ENCODE measurements at regions of chr11 and their contacts with region 1.

Region 1: DNA sequence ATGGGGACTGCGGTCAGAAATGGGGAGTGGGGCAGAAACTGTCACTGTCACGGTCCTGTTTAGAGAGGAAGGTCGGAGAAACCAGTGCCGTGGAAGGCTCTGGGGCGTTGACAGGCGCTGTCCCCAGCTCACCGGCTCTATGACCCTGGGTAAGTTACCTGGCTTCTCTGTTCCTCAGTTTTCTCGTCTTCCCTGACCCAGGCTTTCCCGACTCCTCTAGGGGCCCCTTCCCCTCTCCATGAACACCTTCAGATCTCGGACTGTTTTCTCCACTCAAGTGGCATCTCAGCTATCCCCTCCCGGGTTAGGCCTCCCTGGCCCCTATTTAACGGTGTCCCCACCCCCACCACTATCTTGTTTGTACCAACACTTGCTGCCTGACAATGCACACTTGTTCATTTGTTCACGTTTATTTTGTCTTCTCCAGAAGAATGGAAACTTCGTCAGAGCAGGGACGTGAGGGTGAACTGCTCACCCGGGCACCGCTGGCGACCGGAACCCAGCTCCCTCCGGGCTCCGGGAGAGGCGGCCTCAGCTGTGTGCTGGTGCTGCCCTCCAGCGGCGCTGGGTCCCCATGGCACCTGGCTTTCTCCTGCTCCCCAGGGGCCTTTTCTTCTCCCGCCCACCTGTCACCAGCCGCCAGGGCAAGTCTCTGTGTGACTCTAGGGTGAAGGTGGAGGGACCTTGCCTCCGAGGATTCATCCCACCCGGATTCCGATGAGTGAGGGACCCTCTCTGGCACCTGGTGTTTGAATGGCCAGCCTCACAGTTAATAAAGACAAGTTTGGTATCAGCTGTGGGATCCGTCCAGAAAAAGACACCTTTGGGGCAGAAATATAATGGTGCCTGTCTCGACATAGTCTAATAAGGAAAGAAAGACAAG is 33.1 kb upstream of the SLC35C1 start:
- DNase-seq: peak; percentile 65 to 81
- ATAC-seq: peak; percentile 87 to 92
- H3K4me3 ChIP-seq: peak overlapping the region; percentile 47 to 68 (median 58)
- H3K27ac ChIP-seq: peak overlapping the region; percentile 60 to 81 (median 75)
- H3K4me1 ChIP-seq: peaks cover 0 to 8% of the 10 kb centered on the region in 2 donors
- H3K27me3 ChIP-seq: no peaks in the 10 kb centered on the region
- CTCF ChIP-seq: peak; percentile 88 to 98 (median 95)
- POLR2A ChIP-seq: no peak

Region 2: DNA sequence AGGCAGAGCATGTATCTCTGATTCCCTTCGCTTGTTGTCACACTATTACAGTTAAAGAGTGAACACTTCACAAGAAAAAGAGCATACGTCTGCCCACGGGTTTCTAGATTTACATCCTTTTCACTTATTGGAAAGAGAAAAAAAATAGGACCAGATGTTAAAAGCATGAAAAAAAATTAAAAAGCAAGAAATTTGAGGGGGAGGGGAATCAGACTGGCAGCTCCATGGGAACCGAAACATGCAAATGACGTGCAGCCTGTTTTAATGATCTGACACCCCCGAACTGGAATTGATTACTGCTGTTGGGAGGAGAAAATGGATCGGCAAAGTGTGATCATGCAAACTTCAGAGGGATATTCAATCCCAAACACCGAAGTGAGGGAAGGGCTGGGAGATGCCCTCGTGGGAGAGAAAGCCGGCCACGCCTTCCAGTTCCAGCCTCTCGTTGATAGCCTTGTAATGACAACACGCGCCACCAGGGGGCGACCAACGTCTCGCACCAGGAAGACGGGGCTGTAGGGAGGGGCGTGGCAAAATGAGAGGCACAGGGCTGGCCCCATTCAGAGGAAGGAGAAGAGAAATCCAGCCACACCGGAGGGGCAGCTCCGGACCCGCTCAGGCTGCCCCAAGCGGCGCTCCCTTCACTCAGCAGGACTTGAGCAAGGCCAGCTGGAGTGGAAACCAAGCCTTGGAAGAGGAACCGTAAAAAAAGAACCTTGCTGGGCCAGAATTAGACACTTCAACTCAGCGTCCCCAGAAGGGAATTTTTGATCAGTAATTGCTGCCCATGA is 431.9 kb before region 1 on chr11:
- in situ Hi-C with region 1: loop called in 2 of 4 experiments (anchors 10 kb)
- intact Hi-C with region 1: loop called (anchors 1 kb)
- DNase-seq: peak; percentile 70 to 86
- ATAC-seq: peak; percentile 96 to 99
- H3K4me3 ChIP-seq: peak overlapping the region; percentile 1 to 34 (median 19)
- H3K27ac ChIP-seq: no peak overlapping the region
- H3K4me1 ChIP-seq: peaks cover 10 to 14% of the 10 kb centered on the region in 2 donors
- H3K27me3 ChIP-seq: peaks cover 0 to 6% (median 0%) of the 10 kb centered on the region in 3 donors
- CTCF ChIP-seq: peak; percentile 86 to 90 (median 87)
- POLR2A ChIP-seq: no peak

Region 3: GRCh38 chr11:45365961-45366618 is 405.7 kb before region 1 on chr11:
- in situ Hi-C with region 1: loop called (anchors 10 kb)
- intact Hi-C with region 1: no loop called
- DNase-seq: no peak
- ATAC-seq: no peak
- H3K4me3 ChIP-seq: no peak overlapping the region
- H3K27ac ChIP-seq: no peak overlapping the region
- H3K4me1 ChIP-seq: no peaks in the 10 kb centered on the region
- H3K27me3 ChIP-seq: no peaks in the 10 kb centered on the region
- CTCF ChIP-seq: no peak
- POLR2A ChIP-seq: no peak

Region 4: GRCh38 chr11:45371251-45372115 is 400.3 kb before region 1 on chr11:
- in situ Hi-C with region 1: loop called (anchors 10 kb)
- intact Hi-C with region 1: no loop called
- DNase-seq: peak in 1 of 2 donors; percentile 45
- ATAC-seq: peak; percentile 68 to 75
- H3K4me3 ChIP-seq: no peak overlapping the region
- H3K27ac ChIP-seq: no peak overlapping the region
- H3K4me1 ChIP-seq: no peaks in the 10 kb centered on the region
- H3K27me3 ChIP-seq: no peaks in the 10 kb centered on the region
- CTCF ChIP-seq: peak; percentile 64 to 88 (median 76)
- POLR2A ChIP-seq: no peak

Region 5: DNA sequence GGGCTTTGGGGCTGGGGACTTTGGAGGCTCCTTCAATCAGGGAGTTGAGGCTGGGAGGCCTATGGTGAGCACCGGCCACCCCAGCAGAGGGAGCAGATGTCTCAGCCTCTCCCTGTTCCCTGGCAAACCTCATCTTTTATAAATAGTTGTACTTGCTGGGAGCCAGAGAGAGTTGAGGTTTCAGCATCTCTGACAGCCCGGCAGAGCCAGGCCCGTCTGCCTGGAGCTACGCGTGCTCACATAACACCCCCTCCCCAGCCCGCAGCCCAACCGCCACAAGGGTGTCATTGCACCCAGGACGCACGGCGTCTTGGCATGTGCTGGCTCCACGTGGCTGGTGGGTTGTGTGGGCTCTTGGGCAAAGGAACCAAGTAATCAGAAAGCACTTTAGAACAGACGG is 233.4 kb before region 1 on chr11:
- in situ Hi-C with region 1: loop called (anchors 5 to 25 kb)
- intact Hi-C with region 1: loop called (anchors 1 kb)
- DNase-seq: peak; percentile 35 to 58
- ATAC-seq: peak; percentile 99
- H3K4me3 ChIP-seq: no peak overlapping the region
- H3K27ac ChIP-seq: peak overlapping the region in 1 of 4 donors; percentile 42
- H3K4me1 ChIP-seq: peaks cover 0 to 6% of the 10 kb centered on the region in 2 donors
- H3K27me3 ChIP-seq: no peaks in the 10 kb centered on the region
- CTCF ChIP-seq: peak; percentile 21 to 66 (median 35)
- POLR2A ChIP-seq: no peak

Region 6: GRCh38 chr11:45543808-45544422 is 227.9 kb before region 1 on chr11:
- in situ Hi-C with region 1: loop called (anchors 5 to 25 kb)
- intact Hi-C with region 1: no loop called
- DNase-seq: no peak
- ATAC-seq: no peak
- H3K4me3 ChIP-seq: no peak overlapping the region
- H3K27ac ChIP-seq: no peak overlapping the region
- H3K4me1 ChIP-seq: no peaks in the 10 kb centered on the region
- H3K27me3 ChIP-seq: peaks cover 0 to 5% (median 0%) of the 10 kb centered on the region in 3 donors
- CTCF ChIP-seq: no peak
- POLR2A ChIP-seq: no peak

Region 7: GRCh38 chr11:45593992-45594391 is 177.8 kb before region 1 on chr11:
- in situ Hi-C with region 1: no loop called
- intact Hi-C with region 1: no loop called
- DNase-seq: no peak
- ATAC-seq: no peak
- H3K4me3 ChIP-seq: no peak overlapping the region
- H3K27ac ChIP-seq: no peak overlapping the region
- H3K4me1 ChIP-seq: no peaks in the 10 kb centered on the region
- H3K27me3 ChIP-seq: no peaks in the 10 kb centered on the region
- CTCF ChIP-seq: no peak
- POLR2A ChIP-seq: no peak

Region 8: GRCh38 chr11:45617871-45618601 is 153.8 kb before region 1 on chr11:
- in situ Hi-C with region 1: no loop called
- intact Hi-C with region 1: no loop called
- DNase-seq: no peak
- ATAC-seq: no peak
- H3K4me3 ChIP-seq: no peak overlapping the region
- H3K27ac ChIP-seq: no peak overlapping the region
- H3K4me1 ChIP-seq: peaks cover 0 to 10% of the 10 kb centered on the region in 2 donors
- H3K27me3 ChIP-seq: peaks cover 0 to 4% (median 0%) of the 10 kb centered on the region in 3 donors
- CTCF ChIP-seq: no peak
- POLR2A ChIP-seq: no peak

Region 9: GRCh38 chr11:45655347-45655756 is 116.5 kb before region 1 on chr11:
- in situ Hi-C with region 1: loop called in 2 of 4 experiments (anchors 5 to 25 kb)
- intact Hi-C with region 1: loop called (anchors 1 kb)
- DNase-seq: peak; percentile 38 to 63
- ATAC-seq: peak; percentile 78 to 79
- H3K4me3 ChIP-seq: no peak overlapping the region
- H3K27ac ChIP-seq: no peak overlapping the region
- H3K4me1 ChIP-seq: peaks cover 11 to 17% of the 10 kb centered on the region in 2 donors
- H3K27me3 ChIP-seq: peaks cover 0 to 5% (median 5%) of the 10 kb centered on the region in 3 donors
- CTCF ChIP-seq: peak; percentile 79 to 95 (median 85)
- POLR2A ChIP-seq: no peak

Region 10: GRCh38 chr11:45698777-45699497 is 72.9 kb before region 1 on chr11:
- in situ Hi-C with region 1: no loop called
- intact Hi-C with region 1: no loop called
- DNase-seq: no peak
- ATAC-seq: no peak
- H3K4me3 ChIP-seq: no peak overlapping the region
- H3K27ac ChIP-seq: no peak overlapping the region
- H3K4me1 ChIP-seq: no peaks in the 10 kb centered on the region
- H3K27me3 ChIP-seq: no peaks in the 10 kb centered on the region
- CTCF ChIP-seq: no peak
- POLR2A ChIP-seq: no peak

Region 11: DNA sequence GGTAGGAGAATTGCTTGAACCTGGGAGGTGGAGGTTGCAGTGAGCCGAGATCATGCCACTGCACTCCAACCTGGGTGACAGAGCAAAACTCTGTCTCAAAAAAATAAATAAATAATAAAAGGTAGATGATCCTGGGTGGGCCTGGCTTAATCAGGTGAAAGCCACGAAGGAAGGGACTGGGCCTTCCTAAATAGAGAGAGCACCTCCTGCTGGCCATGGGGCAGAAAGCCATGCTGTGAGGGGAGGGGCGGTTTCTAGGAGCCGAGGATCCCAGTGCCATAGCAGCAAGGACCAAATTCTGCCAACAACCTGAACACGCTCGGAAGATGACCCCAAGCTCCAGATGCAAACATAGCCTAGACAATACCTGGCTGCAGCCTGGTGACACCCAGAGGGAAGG is 551.0 kb after region 1 on chr11:
- in situ Hi-C with region 1: no loop called
- intact Hi-C with region 1: no loop called
- DNase-seq: no peak
- ATAC-seq: no peak
- H3K4me3 ChIP-seq: no peak overlapping the region
- H3K27ac ChIP-seq: no peak overlapping the region
- H3K4me1 ChIP-seq: no peaks in the 10 kb centered on the region
- H3K27me3 ChIP-seq: no peaks in the 10 kb centered on the region
- CTCF ChIP-seq: no peak
- POLR2A ChIP-seq: no peak

Measured in gastrocnemius medialis (tissue), 4 donors.